PC-9 (cell line): ENCODE measurements at regions of chr2 and their contacts with region 1.

Region 1: DNA sequence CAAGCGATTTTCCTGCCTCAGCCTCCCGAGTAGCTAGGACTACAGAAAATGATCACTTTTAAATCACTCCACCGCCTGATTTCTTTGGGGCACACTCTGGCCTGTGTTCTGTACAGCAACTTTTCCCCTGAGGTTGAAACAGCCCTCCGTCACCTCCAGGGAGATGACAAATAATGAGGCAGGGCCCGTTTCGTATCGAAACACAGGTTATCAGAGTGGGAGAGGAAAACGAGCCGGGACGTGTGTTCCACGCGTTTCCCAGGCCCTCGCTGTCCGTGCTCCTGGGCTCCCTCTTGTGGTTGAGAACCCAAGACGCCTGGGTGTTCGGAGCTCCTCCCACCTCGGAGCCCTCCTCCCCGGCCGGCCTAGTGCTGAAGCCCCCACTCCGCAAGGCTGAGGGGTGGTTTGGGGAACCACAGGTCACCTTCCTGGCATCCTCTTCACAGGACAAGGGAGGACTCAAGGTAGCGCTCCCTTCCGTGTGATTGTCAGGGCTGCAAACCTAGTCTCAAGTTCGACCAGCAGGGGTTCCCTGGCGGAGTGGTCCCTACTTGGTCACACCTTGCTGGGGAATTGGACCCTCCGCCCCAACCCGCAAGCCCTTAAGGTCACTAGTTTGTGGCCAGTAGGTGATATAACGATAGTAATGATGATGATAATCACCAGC is 12.8 kb downstream of the ATP6V1B1 start:
- DNase-seq: peak in 1 of 2 experiments; percentile 70
- H3K4me3 ChIP-seq: peak overlapping the region; percentile 45; the same call in 1 of the 2 replicates
- H3K27ac ChIP-seq: no peak overlapping the region
- H3K4me1 ChIP-seq: peaks cover 7% of the 10 kb centered on the region; the same call in 1 of the 2 replicates
- H3K27me3 ChIP-seq: no peaks in the 10 kb centered on the region
- CTCF ChIP-seq: peak; percentile 86

Region 2: DNA sequence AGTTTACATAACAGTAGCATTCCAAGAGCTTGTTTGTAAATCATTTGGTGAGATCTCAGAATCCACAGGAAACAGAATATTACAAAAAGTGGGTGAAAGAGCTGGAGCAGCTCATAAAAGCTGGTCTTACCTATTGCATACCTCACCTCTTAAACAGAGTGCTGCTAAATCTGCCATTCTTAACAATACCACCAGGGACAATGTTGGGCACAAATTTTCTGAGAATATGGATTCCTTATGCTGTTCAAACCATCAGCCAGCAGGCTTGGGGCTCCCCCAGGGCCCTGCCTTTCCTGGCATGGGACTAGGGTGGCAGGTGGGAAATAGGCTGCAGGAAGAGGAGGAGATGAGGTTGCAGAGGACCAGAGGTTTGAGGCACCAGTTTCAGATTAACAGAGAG is 450.4 kb before region 1 on chr2:
- CTCF ChIA-PET with region 1: no interaction called
- POLR2A ChIA-PET with region 1: no interaction called
- intact Hi-C with region 1: no loop called
- DNase-seq: peak in 1 of 2 experiments; percentile 75
- H3K4me3 ChIP-seq: no peak overlapping the region
- H3K27ac ChIP-seq: peak overlapping the region; percentile 48
- H3K4me1 ChIP-seq: peaks cover 31% of the 10 kb centered on the region
- H3K27me3 ChIP-seq: no peaks in the 10 kb centered on the region
- CTCF ChIP-seq: peak; percentile 71

Region 3: DNA sequence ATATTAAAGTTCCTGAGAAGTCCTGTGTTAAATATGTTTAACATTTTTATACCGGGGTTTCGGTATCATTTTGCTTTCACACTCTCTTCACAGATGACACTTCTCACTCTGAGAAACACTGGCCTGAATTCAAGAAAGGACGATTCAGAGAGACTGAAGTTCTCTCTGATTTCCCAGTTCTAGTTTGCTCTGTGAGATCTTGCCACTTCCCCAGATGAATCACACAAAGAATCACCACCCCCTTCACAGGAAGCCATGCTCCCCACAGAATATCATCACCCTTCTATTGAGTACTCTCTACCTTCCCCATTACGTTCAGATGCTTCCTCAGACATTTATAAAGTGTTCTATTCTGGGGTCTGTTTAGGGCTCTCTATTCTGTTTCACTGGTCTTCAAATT is 96.8 kb before region 1 on chr2:
- CTCF ChIA-PET with region 1: no interaction called
- POLR2A ChIA-PET with region 1: no interaction called
- intact Hi-C with region 1: no loop called
- DNase-seq: no peak
- H3K4me3 ChIP-seq: no peak overlapping the region
- H3K27ac ChIP-seq: no peak overlapping the region
- H3K4me1 ChIP-seq: no peaks in the 10 kb centered on the region
- H3K27me3 ChIP-seq: peaks cover 55% of the 10 kb centered on the region
- CTCF ChIP-seq: no peak

Region 4: GRCh38 chr2:70871398-70872211 is 76.9 kb before region 1 on chr2:
- CTCF ChIA-PET with region 1: interaction called, 23 read pairs
- POLR2A ChIA-PET with region 1: no interaction called
- intact Hi-C with region 1: loop called (anchors 1 kb)
- DNase-seq: peak; percentile 61 to 84
- H3K4me3 ChIP-seq: no peak overlapping the region
- H3K27ac ChIP-seq: no peak overlapping the region
- H3K4me1 ChIP-seq: no peaks in the 10 kb centered on the region
- H3K27me3 ChIP-seq: peaks cover 41% of the 10 kb centered on the region
- CTCF ChIP-seq: peak; percentile 91

Region 5: GRCh38 chr2:70919672-70920366 is 28.7 kb before region 1 on chr2:
- CTCF ChIA-PET with region 1: no interaction called
- POLR2A ChIA-PET with region 1: interaction called, 3 read pairs
- intact Hi-C with region 1: loop called (anchors 2 kb)
- DNase-seq: peak; percentile 65 to 82
- H3K4me3 ChIP-seq: no peak overlapping the region
- H3K27ac ChIP-seq: no peak overlapping the region
- H3K4me1 ChIP-seq: no peaks in the 10 kb centered on the region
- H3K27me3 ChIP-seq: no peaks in the 10 kb centered on the region
- CTCF ChIP-seq: peak; percentile 95

Region 6: GRCh38 chr2:71071667-71072398 is 123.4 kb after region 1 on chr2:
- CTCF ChIA-PET with region 1: no interaction called
- POLR2A ChIA-PET with region 1: no interaction called
- intact Hi-C with region 1: no loop called
- DNase-seq: peak in 1 of 2 experiments; percentile 45
- H3K4me3 ChIP-seq: no peak overlapping the region
- H3K27ac ChIP-seq: no peak overlapping the region
- H3K4me1 ChIP-seq: peaks cover 23% of the 10 kb centered on the region
- H3K27me3 ChIP-seq: no peaks in the 10 kb centered on the region
- CTCF ChIP-seq: no peak

Region 7: DNA sequence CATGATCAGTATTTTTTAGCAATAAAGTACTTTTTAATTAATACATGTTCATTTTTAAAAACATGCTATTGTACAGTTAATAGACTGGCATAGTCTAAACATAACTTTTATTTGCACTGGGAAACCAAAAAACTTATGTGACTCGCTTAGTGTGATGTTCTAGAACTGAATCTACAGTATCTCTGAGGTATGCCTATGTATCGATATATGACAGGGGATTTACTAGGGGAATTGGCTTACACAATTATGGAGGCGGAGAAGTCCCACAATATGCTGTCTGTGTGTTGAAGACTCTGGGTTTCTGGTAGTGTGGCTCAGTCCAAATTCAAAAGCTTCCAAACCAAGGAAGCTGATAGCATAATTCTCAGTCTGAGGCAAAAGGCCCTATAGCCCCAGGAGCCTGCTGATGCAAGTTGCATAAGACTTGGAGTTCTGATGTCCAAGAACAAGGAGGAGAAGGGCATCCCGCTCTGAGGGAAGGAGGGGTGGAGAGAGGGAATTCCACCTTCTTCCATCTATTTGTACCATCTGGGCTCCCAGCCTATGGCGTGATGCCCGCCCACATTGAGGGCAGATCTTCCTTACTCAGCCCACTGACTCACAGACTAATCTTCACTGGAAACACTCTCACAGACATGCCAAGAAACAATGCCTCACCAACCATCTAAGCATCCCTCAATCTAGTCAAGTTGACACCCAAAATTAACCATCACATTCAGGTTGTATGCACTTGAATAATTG is 410.6 kb after region 1 on chr2:
- CTCF ChIA-PET with region 1: no interaction called
- POLR2A ChIA-PET with region 1: no interaction called
- intact Hi-C with region 1: no loop called
- DNase-seq: no peak
- H3K4me3 ChIP-seq: no peak overlapping the region
- H3K27ac ChIP-seq: no peak overlapping the region
- H3K4me1 ChIP-seq: no peaks in the 10 kb centered on the region
- H3K27me3 ChIP-seq: no peaks in the 10 kb centered on the region
- CTCF ChIP-seq: no peak